Ovary (tissue), 10 donors: ENCODE measurements at regions of chr12 and their contacts with region 1.

Region 1: DNA sequence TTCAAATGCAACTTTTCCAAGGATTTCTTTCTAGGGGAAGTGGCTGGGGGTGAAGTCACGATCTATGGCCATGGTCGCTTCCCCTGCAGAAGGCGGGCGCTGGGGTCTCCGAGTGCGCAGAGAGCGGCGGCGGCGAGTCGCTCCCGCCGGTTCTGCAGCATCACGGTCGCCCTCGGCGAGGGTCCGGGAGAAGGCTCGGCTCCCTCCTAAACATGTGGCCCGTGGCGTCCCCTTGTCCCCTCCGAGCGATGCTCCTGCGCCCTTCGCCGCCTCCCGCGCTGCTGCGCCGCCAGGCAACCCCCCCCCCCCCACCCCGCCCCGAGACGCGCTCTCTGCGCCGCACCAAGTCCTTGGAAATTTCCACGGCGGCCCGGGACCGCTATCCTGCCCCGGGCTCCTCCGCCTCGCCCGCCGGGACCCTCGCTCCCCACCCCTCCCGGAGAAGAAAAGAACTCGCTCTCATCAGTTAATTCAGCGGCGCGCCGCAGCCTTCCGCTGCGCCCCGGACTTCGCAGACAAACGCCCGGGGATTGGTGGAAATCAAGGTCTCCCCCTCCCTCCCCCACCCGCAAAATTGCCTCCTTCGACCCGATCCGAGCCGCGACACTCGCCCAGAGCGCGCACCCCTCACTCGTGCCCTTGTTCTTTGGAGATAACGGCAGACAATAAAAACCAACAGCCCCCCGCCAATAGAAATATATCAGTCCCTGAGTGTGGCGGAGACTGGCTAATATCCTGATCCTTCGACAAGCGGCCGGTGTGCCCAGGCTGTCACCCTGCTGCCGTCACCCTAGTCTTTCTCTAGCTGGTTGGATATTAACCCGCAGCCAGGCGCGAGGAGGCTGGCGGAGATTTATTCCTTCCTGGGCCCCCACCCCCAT is at the start of gene ST8SIA1:
- DNase-seq: peak; percentile 24 to 60 (median 45)
- H3K4me3 ChIP-seq: peak within 1 kb of the TSS; percentile 59
- H3K27ac ChIP-seq: no peak within 1 kb of the TSS
- H3K4me1 ChIP-seq: peaks cover 3% of the 10 kb centered on the region
- H3K27me3 ChIP-seq: no peaks in the 10 kb centered on the region
- CTCF ChIP-seq: no peak
- EP300 ChIP-seq: no peak
- POLR2A ChIP-seq: no peak
- total RNA-seq, gene ST8SIA1: 0.69 to 4.8 (median 4.1) TPM

Region 2: GRCh38 chr12:21731144-21731543 is 603.5 kb before region 1 on chr12:
- intact Hi-C with region 1: no loop called
- DNase-seq: no peak
- H3K4me3 ChIP-seq: no peak overlapping the region
- H3K27ac ChIP-seq: no peak overlapping the region
- H3K4me1 ChIP-seq: no peaks in the 10 kb centered on the region
- H3K27me3 ChIP-seq: no peaks in the 10 kb centered on the region
- CTCF ChIP-seq: no peak
- EP300 ChIP-seq: no peak
- POLR2A ChIP-seq: no peak

Region 3: DNA sequence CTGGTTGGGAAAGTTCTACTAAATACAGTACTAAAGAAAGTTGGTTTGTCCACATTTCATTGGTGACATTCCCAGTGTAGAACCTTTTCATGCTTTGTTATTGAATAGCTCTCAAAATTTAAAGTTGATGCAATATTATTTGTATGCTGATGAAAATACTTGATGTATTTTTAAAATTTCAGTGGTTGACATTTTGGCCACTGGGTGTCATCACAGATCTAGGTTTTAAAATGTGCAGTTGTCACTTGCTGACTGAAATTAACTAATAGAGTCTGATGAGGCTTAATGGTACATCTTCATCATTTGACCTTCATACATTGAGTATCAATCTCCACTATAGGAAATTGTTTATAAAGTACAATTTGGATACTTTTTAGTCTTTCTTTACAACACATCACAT is 251.5 kb before region 1 on chr12:
- intact Hi-C with region 1: loop called in 2 of 4 experiments (anchors 5 to 10 kb)
- DNase-seq: peak in 1 of 5 donors; percentile 27
- H3K4me3 ChIP-seq: no peak overlapping the region
- H3K27ac ChIP-seq: no peak overlapping the region
- H3K4me1 ChIP-seq: no peaks in the 10 kb centered on the region
- H3K27me3 ChIP-seq: no peaks in the 10 kb centered on the region
- CTCF ChIP-seq: peak in 2 of 3 donors; percentile 51 to 54
- EP300 ChIP-seq: no peak
- POLR2A ChIP-seq: no peak

Region 4: DNA sequence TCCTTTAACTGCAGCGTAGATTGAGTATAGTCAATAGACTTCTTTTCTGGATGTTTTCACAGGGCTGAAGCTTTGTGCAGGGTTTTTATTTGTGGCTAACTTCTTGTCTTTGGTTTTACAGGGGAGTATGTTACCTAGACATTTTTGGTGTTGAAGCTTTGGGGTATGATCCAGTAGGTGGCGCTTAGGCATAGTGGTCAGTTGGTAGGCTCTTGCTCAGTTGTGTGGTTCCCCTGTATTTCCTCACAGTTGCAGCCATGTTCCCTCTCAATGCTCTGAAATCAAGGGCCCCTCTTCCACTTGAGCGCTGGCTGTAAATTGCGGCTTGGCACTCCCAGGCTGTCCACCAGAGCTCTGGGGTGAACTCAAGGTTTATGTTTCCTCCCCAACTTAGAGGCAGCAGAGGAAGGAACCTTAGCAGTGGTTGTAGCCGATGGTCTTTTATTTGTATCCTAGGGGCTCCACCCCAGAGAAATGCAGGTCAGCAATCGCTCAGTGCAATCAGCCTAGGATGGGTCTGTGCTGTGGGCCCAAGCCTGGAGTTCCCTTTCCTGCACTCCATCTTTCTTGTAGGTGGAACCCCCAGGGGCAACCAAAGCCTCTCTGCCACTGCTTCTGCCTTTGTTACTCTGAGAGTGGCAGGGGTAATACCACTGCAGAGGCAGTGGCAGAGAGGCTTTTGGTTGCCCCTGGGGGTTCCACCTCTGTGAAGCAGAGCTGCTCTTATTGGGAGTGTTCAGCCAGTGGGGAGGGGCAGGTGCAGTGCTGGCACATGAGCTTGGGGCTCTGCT is 233.5 kb before region 1 on chr12:
- intact Hi-C with region 1: loop called in 1 of 4 experiments (anchors 10 kb)
- DNase-seq: peak in 1 of 5 donors; percentile 34
- H3K4me3 ChIP-seq: no peak overlapping the region
- H3K27ac ChIP-seq: no peak overlapping the region
- H3K4me1 ChIP-seq: no peaks in the 10 kb centered on the region
- H3K27me3 ChIP-seq: no peaks in the 10 kb centered on the region
- CTCF ChIP-seq: no peak
- EP300 ChIP-seq: no peak
- POLR2A ChIP-seq: no peak

Region 5: GRCh38 chr12:22443379-22444316 is 109.0 kb after region 1 on chr12:
- intact Hi-C with region 1: loop called in 1 of 4 experiments (anchors 10 kb)
- DNase-seq: peak; percentile 42 to 63 (median 47)
- H3K4me3 ChIP-seq: no peak overlapping the region
- H3K27ac ChIP-seq: no peak overlapping the region
- H3K4me1 ChIP-seq: no peaks in the 10 kb centered on the region
- H3K27me3 ChIP-seq: no peaks in the 10 kb centered on the region
- CTCF ChIP-seq: peak; percentile 43 to 59 (median 52)
- EP300 ChIP-seq: no peak
- POLR2A ChIP-seq: no peak